K562 (cell line): ENCODE measurements at regions of chr19 and their contacts with region 1.

Region 1: GRCh38 chr19:39846176-39846677 is at the start of gene FBL:
- DNase-seq: peak; percentile 96 to 99 (median 98)
- ATAC-seq: peak; percentile 88
- H3K4me3 ChIP-seq: peak within 1 kb of the TSS; percentile 86
- H3K27ac ChIP-seq: peak within 1 kb of the TSS; percentile 79
- H3K4me1 ChIP-seq: peaks cover 20 to 41% of the 10 kb centered on the region in 2 experiments; a peak in 4 of 5 replicates
- H3K27me3 ChIP-seq: no peaks in the 10 kb centered on the region
- CTCF ChIP-seq: no peak
- EP300 ChIP-seq: no peak
- POLR2A ChIP-seq: peak; percentile 87
- RAD21 ChIP-seq: no peak
- polyA plus RNA-seq, gene FBL: 201 to 235 TPM

Region 2: GRCh38 chr19:39557441-39558151 is 288.6 kb before region 1 on chr19:
- CTCF ChIA-PET with region 1: no interaction called
- POLR2A ChIA-PET with region 1: no interaction called
- in situ Hi-C with region 1: no loop called
- intact Hi-C with region 1: loop called (anchors 5 kb)
- DNase-seq: no peak
- ATAC-seq: peak; percentile 69
- H3K4me3 ChIP-seq: no peak overlapping the region
- H3K27ac ChIP-seq: no peak overlapping the region
- H3K4me1 ChIP-seq: no peaks in the 10 kb centered on the region
- H3K27me3 ChIP-seq: peaks cover 15 to 28% of the 10 kb centered on the region in 2 experiments; a peak in 4 of 5 replicates
- CTCF ChIP-seq: no peak
- EP300 ChIP-seq: no peak
- POLR2A ChIP-seq: no peak
- RAD21 ChIP-seq: no peak

Region 3: GRCh38 chr19:39765091-39766076 is 80.8 kb before region 1 on chr19:
- CTCF ChIA-PET with region 1: interaction called, 7 read pairs
- POLR2A ChIA-PET with region 1: interaction called, 3 read pairs
- in situ Hi-C with region 1: no loop called
- intact Hi-C with region 1: loop called (anchors 2 kb)
- DNase-seq: peak; percentile 30 to 73 (median 58)
- ATAC-seq: peak; percentile 67; the same call in 1 of the 3 replicates
- H3K4me3 ChIP-seq: no peak overlapping the region
- H3K27ac ChIP-seq: no peak overlapping the region
- H3K4me1 ChIP-seq: no peaks in the 10 kb centered on the region
- H3K27me3 ChIP-seq: peaks cover 0 to 9% of the 10 kb centered on the region in 2 experiments; a peak in 1 of 5 replicates
- CTCF ChIP-seq: peak; percentile 74 to 79 (median 78)
- EP300 ChIP-seq: no peak
- POLR2A ChIP-seq: no peak
- RAD21 ChIP-seq: peak in 1 of 2 experiments; percentile 53; a peak in 2 of 4 replicates

Region 4: GRCh38 chr19:39792999-39793546 is 53.2 kb before region 1 on chr19:
- CTCF ChIA-PET with region 1: interaction called, 36 read pairs
- POLR2A ChIA-PET with region 1: interaction called, 3 read pairs
- in situ Hi-C with region 1: no loop called
- intact Hi-C with region 1: loop called (anchors 1 kb)
- DNase-seq: peak; percentile 82 to 96 (median 90)
- ATAC-seq: peak; percentile 98
- H3K4me3 ChIP-seq: 0 out of 2 replicates have a peak overlapping the region, but pooled peaks have one; percentile 3
- H3K27ac ChIP-seq: no peak overlapping the region
- H3K4me1 ChIP-seq: peaks cover 0 to 3% of the 10 kb centered on the region in 2 experiments; a peak in 1 of 5 replicates
- H3K27me3 ChIP-seq: peaks cover 0 to 12% of the 10 kb centered on the region in 2 experiments; a peak in 4 of 5 replicates
- CTCF ChIP-seq: peak; percentile 88 to 91 (median 89)
- EP300 ChIP-seq: no peak
- POLR2A ChIP-seq: no peak
- RAD21 ChIP-seq: peak; percentile 65 to 95

Region 5: GRCh38 chr19:39833464-39834286 is 12.6 kb before region 1 on chr19 and contains the start of gene DYRK1B:
- CTCF ChIA-PET with region 1: interaction called, 4 read pairs
- POLR2A ChIA-PET with region 1: interaction called, 17 read pairs
- in situ Hi-C with region 1: no loop called
- intact Hi-C with region 1: no loop called
- DNase-seq: peak; percentile 94 to 97 (median 95)
- ATAC-seq: peak; percentile 96
- H3K4me3 ChIP-seq: peak within 1 kb of the TSS; percentile 51
- H3K27ac ChIP-seq: peak within 1 kb of the TSS; percentile 76
- H3K4me1 ChIP-seq: peaks cover 15 to 24% of the 10 kb centered on the region in 2 experiments
- H3K27me3 ChIP-seq: no peaks in the 10 kb centered on the region
- CTCF ChIP-seq: no peak
- EP300 ChIP-seq: peak; percentile 24; the same call in 1 of the 2 replicates
- POLR2A ChIP-seq: peak; percentile 88
- RAD21 ChIP-seq: no peak
- polyA plus RNA-seq, gene DYRK1B: not detected